Testis (tissue), 5 donors: ENCODE measurements at regions of chr5 and their contacts with region 1.

Region 1: GRCh38 chr5:53109443-53110127 is at the start of gene MOCS2:
- DNase-seq: peak; percentile 91
- H3K4me3 ChIP-seq: peak within 1 kb of the TSS; percentile 59 to 84
- H3K27ac ChIP-seq: peak within 1 kb of the TSS; percentile 78 to 79
- H3K4me1 ChIP-seq: peaks cover 7% of the 10 kb centered on the region
- H3K27me3 ChIP-seq: no peaks in the 10 kb centered on the region
- CTCF ChIP-seq: peak in 1 of 3 experiments; percentile 8
- POLR2A ChIP-seq: peak; percentile 39
- total RNA-seq, gene MOCS2: 45.6 to 46.1 TPM

Region 2: DNA sequence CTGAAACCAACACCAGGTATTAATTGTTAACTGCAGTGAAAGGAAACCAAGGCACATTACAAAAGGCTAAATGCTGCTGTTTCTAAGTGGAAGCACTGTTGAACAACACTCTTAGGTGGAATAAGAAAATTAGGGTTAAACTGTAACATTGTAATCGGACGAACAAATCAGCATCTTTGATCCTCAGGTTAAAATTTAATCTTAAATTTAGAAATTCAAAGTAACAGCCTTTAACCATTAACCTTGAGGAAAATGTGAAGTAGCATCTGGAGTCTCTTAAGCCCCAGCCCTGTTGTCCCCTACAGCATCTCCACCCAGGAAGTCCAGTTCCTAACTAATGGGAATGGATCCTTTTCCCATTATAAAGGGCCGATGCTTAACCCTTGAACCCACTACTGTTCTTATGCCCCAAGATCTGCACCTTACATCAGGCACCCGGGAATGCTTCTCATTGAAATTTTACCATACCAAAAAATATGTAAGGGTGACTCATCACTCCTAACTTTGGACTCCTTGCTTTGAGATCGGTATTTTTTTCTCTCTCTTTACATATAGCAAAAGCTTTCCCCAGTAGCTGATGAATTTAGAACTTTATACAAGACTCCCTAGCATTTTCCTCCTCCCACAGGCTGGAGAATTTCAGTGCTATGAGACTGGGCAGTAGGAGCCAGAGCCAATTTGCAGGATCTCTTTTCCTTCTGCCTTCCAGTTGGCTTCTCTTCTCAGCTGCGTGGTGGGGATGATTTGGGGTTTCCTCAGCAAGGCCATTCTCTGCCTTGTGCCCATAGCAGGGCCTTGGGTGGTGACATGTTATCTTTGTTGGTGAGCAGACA is 152.5 kb before region 1 on chr5:
- intact Hi-C with region 1: loop called (anchors 10 kb)
- DNase-seq: no peak
- H3K4me3 ChIP-seq: no peak overlapping the region
- H3K27ac ChIP-seq: no peak overlapping the region
- H3K4me1 ChIP-seq: no peaks in the 10 kb centered on the region
- H3K27me3 ChIP-seq: no peaks in the 10 kb centered on the region
- CTCF ChIP-seq: no peak
- POLR2A ChIP-seq: no peak